ENCODE measurements at regions of chr2 and their contacts with region 1.

Region 1: DNA sequence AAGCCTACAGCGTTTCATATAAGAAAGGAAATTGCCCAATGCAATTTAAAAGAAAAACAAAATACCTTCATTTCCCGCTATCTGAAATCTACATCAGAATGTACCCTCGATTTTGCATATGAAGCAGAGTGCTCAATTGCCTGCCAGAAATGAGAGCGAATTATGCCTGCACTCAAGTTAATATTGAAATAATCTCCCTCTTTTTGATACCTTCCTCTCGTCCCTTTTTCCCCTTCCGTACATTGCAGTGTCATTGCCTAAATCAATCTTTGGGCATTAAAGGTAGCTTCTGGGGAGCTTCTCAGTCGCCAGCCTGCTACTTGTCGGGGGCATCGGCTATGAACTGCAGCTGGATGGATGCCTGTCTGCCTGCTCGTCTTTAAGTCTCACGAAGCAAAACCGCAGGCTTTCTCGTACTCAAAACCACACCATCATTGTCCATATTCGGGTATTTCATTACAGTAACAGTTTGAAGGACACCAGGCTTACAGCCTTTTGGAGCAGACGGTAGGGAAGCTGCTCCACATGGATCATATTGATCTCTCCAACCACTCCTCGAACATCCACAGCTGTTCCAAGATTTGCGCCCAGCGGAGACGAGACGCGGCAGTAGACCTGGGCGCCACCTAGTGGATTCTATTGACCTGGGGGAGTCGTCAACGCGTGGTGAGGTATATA is 64.0 kb upstream of the HNRNPA3 start:
- DNase-seq: peak; percentile 70
- H3K4me3 ChIP-seq: peak overlapping the region; percentile 49 to 61
- H3K27ac ChIP-seq: no peak overlapping the region
- H3K4me1 ChIP-seq: peaks cover 4 to 5% of the 10 kb centered on the region in 2 experiments; a peak in 3 of 4 replicates
- H3K27me3 ChIP-seq: no peaks in the 10 kb centered on the region
- CTCF ChIP-seq: peak; percentile 91
- EP300 ChIP-seq: no peak
- RAD21 ChIP-seq: peak; percentile 76

Region 2: GRCh38 chr2:176135034-176135440 is 1013.6 kb before region 1 on chr2:
- CTCF ChIA-PET with region 1: interaction called, 18 read pairs
- POLR2A ChIA-PET with region 1: no interaction called
- DNase-seq: no peak
- H3K4me3 ChIP-seq: no peak overlapping the region
- H3K27ac ChIP-seq: peak overlapping the region; percentile 63 to 92
- H3K4me1 ChIP-seq: peaks cover 30 to 52% of the 10 kb centered on the region in 2 experiments
- H3K27me3 ChIP-seq: no peaks in the 10 kb centered on the region
- CTCF ChIP-seq: peak; percentile 27
- EP300 ChIP-seq: peak in 1 of 2 experiments; percentile 83; a peak in 2 of 4 replicates
- RAD21 ChIP-seq: peak; percentile 68

Region 3: GRCh38 chr2:176653479-176654443 is 494.9 kb before region 1 on chr2:
- CTCF ChIA-PET with region 1: interaction called, 75 read pairs
- POLR2A ChIA-PET with region 1: interaction called, 6 read pairs
- DNase-seq: peak; percentile 61
- H3K4me3 ChIP-seq: peak overlapping the region in 1 of 2 experiments; percentile 18; a peak in 1 of 4 replicates
- H3K27ac ChIP-seq: peak overlapping the region; percentile 25 to 80; a peak in 3 of 4 replicates
- H3K4me1 ChIP-seq: peaks cover 8 to 41% of the 10 kb centered on the region in 2 experiments; a peak in 3 of 4 replicates
- H3K27me3 ChIP-seq: no peaks in the 10 kb centered on the region
- CTCF ChIP-seq: peak; percentile 75
- EP300 ChIP-seq: no peak
- RAD21 ChIP-seq: peak; percentile 76

Region 4: GRCh38 chr2:176804392-176804791 is 344.2 kb before region 1 on chr2:
- CTCF ChIA-PET with region 1: interaction called, 14 read pairs
- POLR2A ChIA-PET with region 1: no interaction called
- DNase-seq: no peak
- H3K4me3 ChIP-seq: no peak overlapping the region
- H3K27ac ChIP-seq: no peak overlapping the region
- H3K4me1 ChIP-seq: peaks cover 0 to 2% of the 10 kb centered on the region in 2 experiments; a peak in 2 of 4 replicates
- H3K27me3 ChIP-seq: no peaks in the 10 kb centered on the region
- CTCF ChIP-seq: no peak
- EP300 ChIP-seq: no peak
- RAD21 ChIP-seq: no peak

Region 5: GRCh38 chr2:177051278-177051677 is 97.3 kb before region 1 on chr2:
- CTCF ChIA-PET with region 1: interaction called, 20 read pairs
- POLR2A ChIA-PET with region 1: no interaction called
- DNase-seq: peak; percentile 37
- H3K4me3 ChIP-seq: no peak overlapping the region
- H3K27ac ChIP-seq: no peak overlapping the region
- H3K4me1 ChIP-seq: peaks cover 0 to 7% of the 10 kb centered on the region in 2 experiments; a peak in 2 of 4 replicates
- H3K27me3 ChIP-seq: no peaks in the 10 kb centered on the region
- CTCF ChIP-seq: no peak
- EP300 ChIP-seq: peak in 1 of 2 experiments; percentile 80; a peak in 2 of 4 replicates
- RAD21 ChIP-seq: no peak

Region 6: GRCh38 chr2:177763532-177764265 is 615.1 kb after region 1 on chr2:
- CTCF ChIA-PET with region 1: interaction called, 10 read pairs
- POLR2A ChIA-PET with region 1: no interaction called
- DNase-seq: peak; percentile 67
- H3K4me3 ChIP-seq: no peak overlapping the region
- H3K27ac ChIP-seq: no peak overlapping the region
- H3K4me1 ChIP-seq: peaks cover 0 to 4% of the 10 kb centered on the region in 2 experiments; a peak in 1 of 4 replicates
- H3K27me3 ChIP-seq: no peaks in the 10 kb centered on the region
- CTCF ChIP-seq: peak; percentile 78
- EP300 ChIP-seq: no peak
- RAD21 ChIP-seq: peak; percentile 54

Measured in SK-N-SH (cell line).